ENCODE measurements at regions of chr19 and their contacts with region 1.

Region 1: DNA sequence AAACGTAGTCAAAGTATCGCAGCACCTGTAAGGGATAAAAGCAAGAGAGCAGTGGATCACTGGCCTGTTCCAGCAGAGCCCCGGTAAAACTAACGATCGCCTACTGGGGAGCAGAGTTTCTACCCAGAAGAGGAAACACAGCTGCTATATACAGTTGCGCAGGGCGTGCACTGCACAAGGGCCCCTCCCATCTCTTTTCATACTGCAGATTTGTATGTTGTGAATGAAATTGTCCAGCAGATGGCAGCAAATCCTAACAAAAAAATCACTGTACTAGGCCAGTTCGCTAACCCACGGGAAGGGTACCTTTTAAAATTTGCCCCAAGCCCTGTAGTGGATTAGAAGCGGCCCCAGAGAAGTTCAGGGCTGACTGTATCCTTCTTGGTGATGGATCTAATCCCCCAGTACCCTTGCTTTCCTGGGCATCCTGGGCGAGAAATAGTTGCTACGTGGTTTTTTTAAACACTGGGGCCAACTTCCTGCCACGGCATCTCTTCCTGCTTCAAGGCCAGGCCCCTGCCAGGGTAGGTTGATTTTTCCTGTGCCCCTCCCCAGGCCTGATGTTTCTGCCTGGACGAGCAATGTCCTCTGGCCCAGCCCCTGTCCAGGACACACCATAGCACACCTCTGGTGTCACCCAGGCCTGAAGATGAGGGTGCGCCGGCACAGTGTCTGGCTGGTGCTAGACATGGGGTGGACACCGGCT is 127.0 kb downstream of the IER2 start:
- DNase-seq: peak; percentile 74 to 81 (median 80)
- H3K4me3 ChIP-seq: no peak overlapping the region
- H3K4me3 Mint-ChIP-seq: peak overlapping the region; percentile 31 to 73 (median 59)
- H3K27ac ChIP-seq: peak overlapping the region; percentile 56
- H3K27ac Mint-ChIP-seq: peak overlapping the region; percentile 79 to 94 (median 87)
- H3K4me1 ChIP-seq: peaks cover 20% of the 10 kb centered on the region
- H3K4me1 Mint-ChIP-seq: peaks cover 20 to 35% (median 25%) of the 10 kb centered on the region in 4 donors
- H3K27me3 ChIP-seq: no peaks in the 10 kb centered on the region
- H3K27me3 Mint-ChIP-seq: peaks cover 4 to 5% of the 10 kb centered on the region in 2 donors

Region 2: DNA sequence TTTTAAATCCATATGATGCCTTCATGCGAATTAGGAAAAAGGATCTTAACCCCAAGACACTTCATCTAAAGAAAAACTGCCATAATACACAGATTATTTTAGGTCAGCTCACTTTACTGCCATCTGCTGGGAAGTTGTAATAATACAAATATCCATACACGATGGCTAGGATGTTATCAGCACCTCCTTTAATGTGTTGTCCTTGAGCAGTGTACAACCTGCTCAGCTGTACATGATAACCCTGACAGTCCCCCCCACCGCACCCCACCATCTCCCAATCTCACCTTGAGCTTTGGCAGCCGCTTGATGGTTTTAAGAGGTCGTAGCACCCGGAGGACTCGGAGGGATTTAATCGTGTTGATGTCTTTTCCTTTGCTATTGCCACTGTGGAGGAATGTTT is 14.8 kb before region 1 on chr19:
- CTCF ChIA-PET with region 1: interaction called, 16 read pairs
- POLR2A ChIA-PET with region 1: no interaction called
- intact Hi-C with region 1: no loop called
- DNase-seq: peak in 4 of 5 donors; percentile 45 to 56 (median 51)
- H3K4me3 ChIP-seq: no peak overlapping the region
- H3K4me3 Mint-ChIP-seq: no peak overlapping the region
- H3K27ac ChIP-seq: no peak overlapping the region
- H3K27ac Mint-ChIP-seq: peak overlapping the region in 3 of 7 donors; percentile 35 to 59 (median 43)
- H3K4me1 ChIP-seq: no peaks in the 10 kb centered on the region
- H3K4me1 Mint-ChIP-seq: peaks cover 2 to 4% (median 3%) of the 10 kb centered on the region in 4 donors
- H3K27me3 ChIP-seq: no peaks in the 10 kb centered on the region
- H3K27me3 Mint-ChIP-seq: peaks cover 7 to 18% of the 10 kb centered on the region in 2 donors

Region 3: GRCh38 chr19:13334801-13335481 is 57.7 kb after region 1 on chr19:
- CTCF ChIA-PET with region 1: no interaction called
- POLR2A ChIA-PET with region 1: no interaction called
- intact Hi-C with region 1: no loop called
- DNase-seq: no peak
- H3K4me3 ChIP-seq: no peak overlapping the region
- H3K4me3 Mint-ChIP-seq: no peak overlapping the region
- H3K27ac ChIP-seq: no peak overlapping the region
- H3K27ac Mint-ChIP-seq: no peak overlapping the region
- H3K4me1 ChIP-seq: no peaks in the 10 kb centered on the region
- H3K4me1 Mint-ChIP-seq: no peaks in the 10 kb centered on the region
- H3K27me3 ChIP-seq: no peaks in the 10 kb centered on the region
- H3K27me3 Mint-ChIP-seq: peaks cover 22 to 25% of the 10 kb centered on the region in 2 donors

Region 4: DNA sequence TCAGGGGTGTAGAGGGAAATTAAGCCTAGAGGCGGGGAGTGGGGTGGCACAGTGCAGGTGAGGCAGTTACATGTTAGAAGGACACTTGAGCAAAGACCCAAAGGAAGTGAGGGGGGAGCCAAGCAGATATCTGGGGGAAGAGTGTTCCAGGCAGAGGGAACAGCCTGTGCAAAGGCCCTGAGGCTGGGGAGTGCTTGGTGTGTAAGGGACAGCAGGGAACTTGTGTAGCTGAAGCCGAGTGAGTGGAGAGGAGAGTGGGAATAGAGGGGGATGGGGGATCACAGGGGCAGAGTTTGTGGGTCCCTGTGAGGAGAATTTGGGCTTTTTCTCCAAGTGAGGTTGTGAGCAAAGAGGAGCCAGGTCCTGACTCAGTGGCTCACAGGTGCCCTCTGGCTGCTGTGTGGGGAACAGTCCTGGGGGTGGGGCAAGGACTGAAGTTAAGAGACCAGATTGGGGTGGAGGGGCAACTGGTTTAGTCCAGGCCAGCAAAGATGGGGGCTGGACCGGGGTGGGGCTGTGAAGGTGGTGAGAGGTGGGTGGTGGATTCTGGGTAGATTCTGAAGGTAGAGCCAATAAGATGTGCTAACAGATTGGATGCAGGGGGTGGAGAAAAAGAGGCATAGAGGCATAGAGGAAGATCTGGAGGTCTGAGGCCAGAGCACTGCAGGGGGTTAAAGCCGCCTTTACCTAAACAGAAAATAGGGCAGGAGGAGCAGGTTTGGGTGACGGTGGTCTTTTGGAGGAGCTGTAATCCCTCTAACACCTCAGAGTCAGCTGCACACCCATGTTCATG is 153.7 kb after region 1 on chr19:
- CTCF ChIA-PET with region 1: interaction called, 19 read pairs
- POLR2A ChIA-PET with region 1: no interaction called
- intact Hi-C with region 1: loop called (anchors 1 kb)
- DNase-seq: peak in 4 of 5 donors; percentile 35 to 40 (median 38)
- H3K4me3 ChIP-seq: no peak overlapping the region
- H3K4me3 Mint-ChIP-seq: no peak overlapping the region
- H3K27ac ChIP-seq: no peak overlapping the region
- H3K27ac Mint-ChIP-seq: no peak overlapping the region
- H3K4me1 ChIP-seq: no peaks in the 10 kb centered on the region
- H3K4me1 Mint-ChIP-seq: no peaks in the 10 kb centered on the region
- H3K27me3 ChIP-seq: no peaks in the 10 kb centered on the region
- H3K27me3 Mint-ChIP-seq: peaks cover 10 to 11% of the 10 kb centered on the region in 2 donors

Region 5: DNA sequence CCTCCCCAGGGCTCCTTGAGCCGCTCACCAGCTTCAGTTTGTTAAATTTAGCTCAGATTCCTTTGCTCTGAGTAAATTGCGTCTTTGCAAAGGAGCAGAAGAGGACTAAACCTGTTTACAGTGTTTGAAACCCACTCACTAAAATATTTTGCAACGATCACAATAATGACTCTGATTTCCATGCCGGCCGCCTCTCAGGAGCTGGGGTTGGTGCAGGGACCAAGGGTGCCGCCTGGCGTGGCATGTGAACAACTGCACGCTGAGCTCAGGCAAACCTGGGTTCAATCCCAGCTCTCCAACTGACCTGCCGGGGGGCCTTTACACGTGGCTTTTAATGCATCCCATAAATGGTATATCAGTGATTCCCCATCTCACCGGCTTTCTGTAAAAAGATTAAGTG is 297.7 kb after region 1 on chr19:
- CTCF ChIA-PET with region 1: interaction called, 10 read pairs
- POLR2A ChIA-PET with region 1: no interaction called
- intact Hi-C with region 1: no loop called
- DNase-seq: no peak
- H3K4me3 ChIP-seq: no peak overlapping the region
- H3K4me3 Mint-ChIP-seq: no peak overlapping the region
- H3K27ac ChIP-seq: no peak overlapping the region
- H3K27ac Mint-ChIP-seq: no peak overlapping the region
- H3K4me1 ChIP-seq: no peaks in the 10 kb centered on the region
- H3K4me1 Mint-ChIP-seq: no peaks in the 10 kb centered on the region
- H3K27me3 ChIP-seq: no peaks in the 10 kb centered on the region
- H3K27me3 Mint-ChIP-seq: peaks cover 21 to 27% of the 10 kb centered on the region in 2 donors

Region 6: DNA sequence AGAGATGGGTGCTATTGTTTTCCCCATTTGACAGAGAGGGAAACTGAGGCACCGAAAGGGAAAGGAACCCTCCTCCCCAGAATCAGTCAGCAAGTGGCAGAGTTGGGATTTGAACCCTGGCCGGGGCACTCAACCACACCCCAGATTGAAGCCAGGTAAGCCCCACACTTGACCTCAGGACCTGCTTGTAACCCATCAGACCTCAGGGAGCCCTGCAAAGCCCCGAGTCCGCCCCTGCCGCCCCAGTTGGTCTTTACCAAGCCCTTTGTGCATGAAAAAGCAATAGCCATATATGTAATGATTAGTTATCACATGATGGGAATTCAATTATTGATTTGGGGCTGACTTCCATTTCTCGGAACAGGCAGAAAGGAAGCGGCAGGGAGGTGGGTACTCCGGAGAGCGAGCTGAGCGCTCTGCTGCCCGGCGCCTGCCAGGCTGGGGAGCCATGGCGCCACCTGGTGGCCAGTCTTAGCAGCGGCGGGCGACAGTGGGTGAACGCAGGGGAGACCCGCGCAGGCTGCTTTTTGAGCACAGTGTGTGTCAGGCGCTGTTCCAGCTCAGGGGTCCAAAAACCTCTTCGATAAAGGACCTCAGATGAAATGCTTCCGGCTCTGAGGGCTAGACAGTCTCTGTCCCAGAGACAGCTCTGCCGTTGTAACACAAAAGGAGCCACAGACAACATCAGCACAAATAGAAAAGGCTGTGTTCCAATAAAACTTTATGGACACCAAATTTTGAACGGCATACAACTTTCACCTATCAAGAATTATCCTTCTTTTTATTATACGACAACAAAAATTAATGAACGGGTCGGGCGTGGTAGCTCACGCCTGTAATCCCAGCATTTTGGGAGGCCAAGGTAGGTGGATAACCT is 311.9 kb after region 1 on chr19:
- CTCF ChIA-PET with region 1: interaction called, 91 read pairs
- POLR2A ChIA-PET with region 1: interaction called, 3 read pairs
- intact Hi-C with region 1: loop called (anchors 1 kb)
- DNase-seq: peak; percentile 63 to 79 (median 77)
- H3K4me3 ChIP-seq: no peak overlapping the region
- H3K4me3 Mint-ChIP-seq: peak overlapping the region in 1 of 8 donors; percentile 20
- H3K27ac ChIP-seq: no peak overlapping the region
- H3K27ac Mint-ChIP-seq: no peak overlapping the region
- H3K4me1 ChIP-seq: peaks cover 7% of the 10 kb centered on the region
- H3K4me1 Mint-ChIP-seq: no peaks in the 10 kb centered on the region
- H3K27me3 ChIP-seq: no peaks in the 10 kb centered on the region
- H3K27me3 Mint-ChIP-seq: peaks cover 2 to 6% of the 10 kb centered on the region in 2 donors

Region 7: DNA sequence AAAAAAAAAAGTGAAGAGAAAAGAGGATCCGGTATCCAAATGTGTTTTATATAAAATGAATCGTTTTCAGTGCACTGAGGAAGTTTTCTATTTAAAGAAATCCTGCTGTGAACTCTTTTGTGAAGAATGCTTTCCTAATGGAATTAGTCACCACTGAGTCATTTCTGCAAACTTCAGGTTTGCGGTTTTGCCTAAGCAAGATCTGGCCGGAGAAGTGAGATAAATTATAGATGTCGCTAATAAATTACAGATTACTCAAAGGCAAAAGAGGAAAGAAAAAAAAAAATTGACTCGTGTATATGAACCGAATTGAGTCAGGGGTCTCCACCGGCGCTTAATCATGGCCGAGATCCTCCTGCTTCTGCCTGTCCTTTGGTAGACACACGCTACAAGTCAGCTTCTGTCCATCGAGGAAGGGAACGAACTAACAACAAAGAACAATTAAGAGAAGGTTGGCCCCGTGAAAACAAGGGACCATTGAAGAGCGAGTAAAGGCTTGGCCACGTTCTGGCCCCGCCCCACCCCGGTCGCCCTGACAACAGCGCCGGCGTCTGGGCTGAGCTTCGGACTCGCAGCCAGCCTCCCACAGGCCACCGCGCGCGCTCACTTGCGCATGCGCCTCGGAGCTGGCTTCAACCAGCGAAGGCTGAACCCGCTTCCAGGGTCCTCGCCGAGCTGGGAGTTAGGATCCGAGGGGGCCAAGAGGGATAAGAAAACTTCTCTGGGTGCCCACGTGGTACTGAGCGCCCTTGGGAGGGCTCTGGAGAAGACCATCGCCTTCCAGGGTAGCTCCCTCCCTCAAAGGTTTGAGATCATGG is 454.1 kb after region 1 on chr19:
- CTCF ChIA-PET with region 1: interaction called, 4 read pairs
- POLR2A ChIA-PET with region 1: no interaction called
- intact Hi-C with region 1: loop called (anchors 5 kb)
- DNase-seq: peak; percentile 92 to 93 (median 92)
- H3K4me3 ChIP-seq: peak overlapping the region; percentile 79 to 87
- H3K4me3 Mint-ChIP-seq: peak overlapping the region; percentile 89 to 97 (median 92)
- H3K27ac ChIP-seq: peak overlapping the region; percentile 59
- H3K27ac Mint-ChIP-seq: peak overlapping the region; percentile 73 to 97 (median 94)
- H3K4me1 ChIP-seq: peaks cover 19% of the 10 kb centered on the region
- H3K4me1 Mint-ChIP-seq: peaks cover 6 to 19% (median 10%) of the 10 kb centered on the region in 4 donors
- H3K27me3 ChIP-seq: no peaks in the 10 kb centered on the region
- H3K27me3 Mint-ChIP-seq: no peaks in the 10 kb centered on the region

Measured in CD4-positive, alpha-beta memory T cell (primary cell).